Right lobe of liver (tissue), 6 donors: ENCODE measurements at regions of chr15 and their contacts with region 1.

Region 1: DNA sequence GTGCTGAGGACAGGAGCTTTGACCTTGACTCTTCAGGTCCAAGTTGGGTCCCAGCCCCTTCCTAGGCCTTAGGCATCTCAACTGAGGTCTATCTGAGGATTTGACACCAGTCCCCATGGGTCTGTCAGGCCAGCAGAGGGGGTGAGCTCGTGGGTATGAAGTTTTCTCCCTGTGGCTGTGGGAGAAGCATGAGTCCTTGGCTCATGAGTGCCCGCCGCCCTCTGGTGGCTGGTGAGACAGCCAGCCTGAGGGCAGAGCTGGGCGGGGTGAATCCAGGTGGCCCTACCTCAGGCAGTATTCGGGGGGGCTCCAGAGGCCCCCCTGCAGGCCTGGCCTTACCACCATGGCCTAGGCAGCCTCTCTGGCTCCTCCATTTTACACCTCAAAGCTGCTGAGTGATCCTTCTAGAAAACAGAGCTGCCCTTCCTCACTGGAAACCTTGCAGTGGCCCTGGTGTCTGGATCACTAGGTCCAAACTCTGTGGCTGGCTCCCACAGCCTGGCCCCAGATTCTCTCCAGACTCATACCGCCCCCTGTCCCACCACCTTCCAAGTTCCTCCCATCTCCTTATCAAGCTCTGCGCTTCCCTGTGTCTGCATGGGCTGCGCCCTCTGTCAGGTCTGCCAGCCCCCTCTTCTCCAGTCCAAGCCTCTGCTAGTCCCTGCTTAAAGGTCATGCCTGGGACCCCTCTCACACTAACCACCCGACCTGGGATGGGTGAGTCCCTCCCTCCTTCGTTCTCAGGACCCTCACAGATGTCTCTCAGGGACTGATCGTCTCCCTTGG is 16.1 kb downstream of the SH2D7 start:
- DNase-seq: peak; percentile 88 to 89 (median 88)
- ATAC-seq: peak; percentile 94 to 96 (median 95)
- H3K4me3 ChIP-seq: no peak overlapping the region
- H3K27ac ChIP-seq: no peak overlapping the region
- H3K4me1 ChIP-seq: no peaks in the 10 kb centered on the region
- H3K27me3 ChIP-seq: no peaks in the 10 kb centered on the region
- CTCF ChIP-seq: peak; percentile 95 to 99 (median 96)
- POLR2A ChIP-seq: no peak

Region 2: DNA sequence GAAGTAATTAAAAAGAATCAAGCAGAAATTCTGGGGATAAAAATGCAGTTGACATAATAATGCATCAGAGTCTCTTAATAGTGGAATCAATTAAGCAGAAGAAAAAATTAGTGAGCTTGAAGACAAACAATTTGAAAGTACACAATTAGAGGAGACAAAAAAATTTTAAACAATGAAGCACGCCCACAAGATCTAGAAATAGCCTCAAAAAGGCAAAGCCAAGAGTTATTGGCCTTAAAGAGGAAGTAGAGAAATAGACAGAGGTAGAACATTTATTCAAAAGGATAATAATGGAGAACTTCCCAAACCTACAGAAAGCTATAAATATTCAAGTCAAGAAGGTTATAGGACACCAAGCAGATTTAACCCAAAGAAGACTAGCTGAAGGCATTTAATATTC is 144.3 kb before region 1 on chr15:
- intact Hi-C with region 1: loop called in 1 of 2 experiments (anchors 5 kb)
- DNase-seq: no peak
- ATAC-seq: no peak
- H3K4me3 ChIP-seq: no peak overlapping the region
- H3K27ac ChIP-seq: no peak overlapping the region
- H3K4me1 ChIP-seq: peaks cover 0 to 5% (median 0%) of the 10 kb centered on the region in 4 donors
- H3K27me3 ChIP-seq: no peaks in the 10 kb centered on the region
- CTCF ChIP-seq: no peak
- POLR2A ChIP-seq: no peak

Region 3: DNA sequence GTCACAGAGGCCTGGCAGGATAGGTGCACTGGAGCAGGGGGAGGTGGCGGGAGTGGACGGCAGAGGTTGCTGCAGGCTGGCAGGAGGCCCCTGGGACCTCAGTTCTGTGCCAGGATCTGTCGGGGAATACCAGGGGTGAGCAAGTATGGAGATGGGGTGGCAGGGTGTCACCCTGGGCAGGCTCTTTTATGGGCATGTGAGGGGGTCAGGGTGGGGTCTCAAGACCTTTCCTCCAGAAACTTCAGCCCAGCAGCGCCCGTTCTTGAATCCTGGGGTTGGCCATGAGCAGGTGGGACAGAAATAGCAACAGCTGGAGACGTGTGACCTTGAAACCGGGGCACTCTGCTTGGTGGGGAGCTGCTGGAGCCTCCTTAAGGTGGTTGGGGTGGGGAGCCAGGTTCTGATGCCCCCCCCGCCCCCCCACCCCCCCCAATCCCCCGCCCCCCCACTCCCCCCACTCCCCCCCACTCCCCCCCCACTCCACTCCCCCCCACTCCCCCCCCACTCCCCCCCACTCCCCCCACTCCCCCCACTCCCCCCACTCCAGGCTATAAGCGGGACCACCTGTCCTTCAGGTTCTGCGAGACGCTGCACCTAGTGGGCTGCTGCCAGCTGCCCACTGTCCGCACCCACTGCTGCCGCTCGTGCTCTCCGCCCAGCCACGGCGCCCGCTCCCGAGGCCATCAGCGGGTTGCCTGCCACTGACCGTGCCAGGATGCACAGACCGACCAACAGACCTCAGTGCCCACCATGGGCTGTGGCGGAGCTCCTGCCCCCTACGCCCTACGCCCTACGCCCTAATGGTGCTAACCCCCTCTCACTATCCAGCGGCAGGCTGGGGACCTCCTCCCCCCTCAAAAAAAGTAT is 115.9 kb before region 1 on chr15:
- intact Hi-C with region 1: loop called in 1 of 2 experiments (anchors 10 kb)
- DNase-seq: peak in 1 of 3 donors; percentile 51
- ATAC-seq: peak in 1 of 4 donors; percentile 2
- H3K4me3 ChIP-seq: no peak overlapping the region
- H3K27ac ChIP-seq: no peak overlapping the region
- H3K4me1 ChIP-seq: peaks cover 0 to 14% (median 2%) of the 10 kb centered on the region in 4 donors
- H3K27me3 ChIP-seq: no peaks in the 10 kb centered on the region
- CTCF ChIP-seq: no peak
- POLR2A ChIP-seq: no peak

Region 4: DNA sequence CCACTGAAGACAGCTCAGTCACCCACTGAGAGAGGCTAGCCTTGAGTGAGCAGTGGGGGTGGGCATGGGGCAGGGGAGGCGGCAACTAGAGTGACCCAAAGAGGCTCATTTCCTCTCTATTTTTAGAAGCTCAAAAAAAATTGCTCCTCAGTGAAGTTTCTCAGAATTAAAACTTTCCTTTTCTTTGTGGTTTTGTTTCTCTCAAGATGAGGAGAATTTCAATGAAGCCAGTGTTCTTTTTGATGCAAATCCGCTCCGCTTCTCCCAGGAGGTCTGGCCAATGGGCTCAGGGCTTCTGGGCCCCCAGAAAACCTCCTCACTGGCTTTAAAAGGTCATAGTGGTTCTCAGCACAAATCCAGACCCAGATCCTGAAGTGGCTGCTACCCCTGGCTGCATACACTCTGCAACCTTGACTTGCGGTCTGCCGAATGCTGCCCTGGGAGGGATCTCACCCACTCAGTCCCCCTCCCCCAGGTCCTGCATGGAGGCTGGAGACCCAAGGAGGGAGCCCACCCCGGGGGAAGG is 126.1 kb after region 1 on chr15 and contains the start of gene ACSBG1:
- intact Hi-C with region 1: loop called (anchors 5 kb)
- DNase-seq: no peak
- ATAC-seq: no peak
- H3K4me3 ChIP-seq: no peak within 1 kb of the TSS
- H3K27ac ChIP-seq: no peak within 1 kb of the TSS
- H3K4me1 ChIP-seq: no peaks in the 10 kb centered on the region
- H3K27me3 ChIP-seq: no peaks in the 10 kb centered on the region
- CTCF ChIP-seq: no peak
- POLR2A ChIP-seq: no peak
- total RNA-seq, gene ACSBG1: not detected